Activated CD4-positive, alpha-beta memory T cell treated with anti-CD3 and anti-CD28 coated beads for 36 hours (primary cell): ENCODE measurements at regions of chr6 and their contacts with region 1.

Region 1: GRCh38 chr6:127855542-127856159 is 45.2 kb downstream of the THEMIS start:
- DNase-seq: peak; percentile 54
- H3K4me3 Mint-ChIP-seq: peak overlapping the region; percentile 38
- H3K27ac Mint-ChIP-seq: peak overlapping the region; percentile 30
- H3K4me1 Mint-ChIP-seq: peaks cover 76% of the 10 kb centered on the region
- H3K27me3 Mint-ChIP-seq: no peaks in the 10 kb centered on the region

Region 2: DNA sequence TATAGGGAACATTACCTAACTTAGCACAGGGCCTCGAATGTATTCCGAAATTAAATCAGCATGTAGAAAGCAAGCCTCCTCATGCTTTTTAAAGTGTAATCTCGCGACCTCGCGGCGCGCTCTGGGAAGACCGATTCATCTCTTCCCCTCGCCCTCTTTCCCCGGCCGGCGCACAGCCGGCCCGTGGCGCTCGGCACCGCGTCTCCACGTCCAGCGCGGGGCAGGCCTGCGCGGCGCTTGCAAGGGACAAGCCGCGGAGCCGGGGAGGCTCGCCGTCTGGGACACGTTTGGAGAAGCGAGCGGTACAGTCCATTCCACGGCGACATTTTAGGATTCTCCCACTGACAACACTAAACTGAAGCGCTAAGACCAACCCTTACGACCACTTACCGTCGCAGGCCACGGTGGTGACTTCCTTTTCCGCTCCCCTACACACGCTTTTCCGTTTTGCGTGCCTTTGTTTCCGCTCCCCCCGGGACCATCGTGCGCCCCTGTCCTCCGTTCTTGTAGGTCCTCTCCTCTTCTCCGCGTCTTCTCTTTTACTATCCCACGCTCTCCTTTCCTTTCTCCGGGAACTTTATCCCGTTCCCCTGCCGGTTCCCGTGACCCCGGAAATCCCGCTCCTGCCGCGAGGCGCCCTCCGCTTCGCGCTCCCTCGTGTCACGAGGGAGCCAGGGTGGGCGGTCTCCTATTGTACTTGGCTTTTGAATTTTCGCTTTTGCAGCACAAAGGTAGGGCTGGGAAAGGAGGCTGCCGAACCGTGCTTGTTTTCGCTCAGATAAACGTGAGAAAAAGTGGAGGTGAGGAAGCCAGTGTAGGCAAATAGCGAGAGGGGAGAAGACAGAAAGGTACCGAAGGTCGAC is 512.5 kb before region 1 on chr6 and contains the start of gene ECHDC1:
- CTCF ChIA-PET with region 1: no interaction called
- POLR2A ChIA-PET with region 1: no interaction called
- intact Hi-C with region 1: no loop called
- DNase-seq: peak; percentile 83
- H3K4me3 Mint-ChIP-seq: no peak within 1 kb of the TSS
- H3K27ac Mint-ChIP-seq: no peak within 1 kb of the TSS
- H3K4me1 Mint-ChIP-seq: peaks cover 7% of the 10 kb centered on the region
- H3K27me3 Mint-ChIP-seq: no peaks in the 10 kb centered on the region
- total RNA-seq, gene ECHDC1: 42.9 to 43.7 TPM

Region 3: GRCh38 chr6:127834136-127834535 is 21.5 kb before region 1 on chr6:
- CTCF ChIA-PET with region 1: interaction called, 12 read pairs
- POLR2A ChIA-PET with region 1: no interaction called
- intact Hi-C with region 1: no loop called
- DNase-seq: no peak
- H3K4me3 Mint-ChIP-seq: no peak overlapping the region
- H3K27ac Mint-ChIP-seq: no peak overlapping the region
- H3K4me1 Mint-ChIP-seq: peaks cover 36% of the 10 kb centered on the region
- H3K27me3 Mint-ChIP-seq: no peaks in the 10 kb centered on the region

Region 4: DNA sequence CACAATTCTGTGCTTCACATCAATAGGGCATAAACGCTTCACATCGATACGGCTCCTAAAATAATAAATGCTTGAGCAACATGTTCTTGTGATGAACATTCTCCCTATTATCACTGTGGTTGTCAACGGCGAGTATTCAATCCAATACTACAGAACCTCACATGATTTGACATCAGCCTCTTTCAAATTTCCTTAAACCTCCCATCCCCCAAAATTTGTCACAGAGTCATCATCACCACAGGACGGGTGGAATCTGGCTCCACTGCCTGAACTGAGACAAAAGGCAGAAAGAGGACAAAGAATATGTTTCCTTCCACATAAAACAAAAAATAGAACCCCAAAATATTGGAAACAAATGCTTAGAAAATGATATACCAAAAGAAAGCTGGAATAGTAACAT is 37.9 kb after region 1 on chr6:
- CTCF ChIA-PET with region 1: interaction called, 9 read pairs
- POLR2A ChIA-PET with region 1: no interaction called
- intact Hi-C with region 1: loop called (anchors 2 kb)
- DNase-seq: peak; percentile 51
- H3K4me3 Mint-ChIP-seq: peak overlapping the region; percentile 73
- H3K27ac Mint-ChIP-seq: peak overlapping the region; percentile 84
- H3K4me1 Mint-ChIP-seq: peaks cover 52% of the 10 kb centered on the region
- H3K27me3 Mint-ChIP-seq: no peaks in the 10 kb centered on the region

Region 5: GRCh38 chr6:127971945-127972391 is 116.3 kb after region 1 on chr6:
- CTCF ChIA-PET with region 1: interaction called, 22 read pairs
- POLR2A ChIA-PET with region 1: no interaction called
- intact Hi-C with region 1: loop called (anchors 2 kb)
- DNase-seq: peak; percentile 59
- H3K4me3 Mint-ChIP-seq: peak overlapping the region; percentile 73
- H3K27ac Mint-ChIP-seq: peak overlapping the region; percentile 88
- H3K4me1 Mint-ChIP-seq: peaks cover 48% of the 10 kb centered on the region
- H3K27me3 Mint-ChIP-seq: no peaks in the 10 kb centered on the region

Region 6: DNA sequence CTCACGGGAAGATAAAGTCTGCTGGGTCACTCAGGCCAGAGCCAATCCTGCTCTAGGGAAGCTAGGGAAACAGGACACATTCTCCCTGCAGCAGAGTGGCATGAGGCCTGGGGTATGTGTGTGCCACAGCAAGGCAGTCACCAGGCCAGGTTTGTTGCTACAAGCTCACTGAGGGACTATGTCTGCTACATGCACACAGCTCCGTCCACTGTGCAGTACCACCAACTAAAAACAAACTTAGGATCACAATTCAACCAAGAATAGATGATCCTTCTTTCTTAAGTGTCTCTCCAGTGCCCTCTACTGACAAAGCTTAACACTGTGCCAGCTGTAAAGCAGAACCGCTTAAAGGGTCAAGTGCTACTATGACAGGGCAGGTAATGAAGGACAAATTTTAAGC is 472.2 kb after region 1 on chr6:
- CTCF ChIA-PET with region 1: interaction called, 59 read pairs
- POLR2A ChIA-PET with region 1: interaction called, 5 read pairs
- intact Hi-C with region 1: loop called (anchors 1 kb)
- DNase-seq: peak; percentile 24
- H3K4me3 Mint-ChIP-seq: no peak overlapping the region
- H3K27ac Mint-ChIP-seq: no peak overlapping the region
- H3K4me1 Mint-ChIP-seq: no peaks in the 10 kb centered on the region
- H3K27me3 Mint-ChIP-seq: no peaks in the 10 kb centered on the region

Region 7: GRCh38 chr6:128731249-128732165 is 875.9 kb after region 1 on chr6:
- CTCF ChIA-PET with region 1: interaction called, 4 read pairs
- POLR2A ChIA-PET with region 1: no interaction called
- intact Hi-C with region 1: loop called (anchors 5 kb)
- DNase-seq: no peak
- H3K4me3 Mint-ChIP-seq: no peak overlapping the region
- H3K27ac Mint-ChIP-seq: no peak overlapping the region
- H3K4me1 Mint-ChIP-seq: no peaks in the 10 kb centered on the region
- H3K27me3 Mint-ChIP-seq: peaks cover 9% of the 10 kb centered on the region

Region 8: DNA sequence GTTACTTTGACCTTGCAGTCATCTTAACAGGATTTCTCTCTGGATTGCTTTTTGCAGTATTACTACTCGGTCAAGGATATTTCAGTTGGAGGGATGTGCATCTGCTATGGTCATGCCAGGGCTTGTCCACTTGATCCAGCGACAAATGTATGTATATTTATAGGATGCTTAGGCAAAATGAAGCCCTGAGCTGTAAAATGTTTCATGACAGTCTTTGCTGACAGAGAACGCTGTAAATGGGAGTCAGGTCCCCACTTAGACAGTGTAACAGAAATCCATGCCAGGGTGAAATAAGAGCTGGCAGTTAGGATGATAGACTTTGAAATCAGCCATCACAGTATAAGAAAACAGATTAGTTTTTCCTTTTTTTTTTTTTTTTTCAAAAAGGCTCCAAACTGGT is 1291.3 kb after region 1 on chr6:
- CTCF ChIA-PET with region 1: no interaction called
- POLR2A ChIA-PET with region 1: no interaction called
- intact Hi-C with region 1: no loop called
- DNase-seq: no peak
- H3K4me3 Mint-ChIP-seq: no peak overlapping the region
- H3K27ac Mint-ChIP-seq: no peak overlapping the region
- H3K4me1 Mint-ChIP-seq: no peaks in the 10 kb centered on the region
- H3K27me3 Mint-ChIP-seq: no peaks in the 10 kb centered on the region